Activated T-helper 2 cell treated with anti-CD3 and anti-CD28 coated beads, Interferon-gamma antibody, Interleukin-2, Interleukin-4, amounts not matched to agents 10 μg/mL and 5 μg/mL and 100 μg/mL, durations not matched to agents 14 hours and 24 hours and 36 hours (primary cell): ENCODE measurements at regions of chr1 and their contacts with region 1.

Region 1: DNA sequence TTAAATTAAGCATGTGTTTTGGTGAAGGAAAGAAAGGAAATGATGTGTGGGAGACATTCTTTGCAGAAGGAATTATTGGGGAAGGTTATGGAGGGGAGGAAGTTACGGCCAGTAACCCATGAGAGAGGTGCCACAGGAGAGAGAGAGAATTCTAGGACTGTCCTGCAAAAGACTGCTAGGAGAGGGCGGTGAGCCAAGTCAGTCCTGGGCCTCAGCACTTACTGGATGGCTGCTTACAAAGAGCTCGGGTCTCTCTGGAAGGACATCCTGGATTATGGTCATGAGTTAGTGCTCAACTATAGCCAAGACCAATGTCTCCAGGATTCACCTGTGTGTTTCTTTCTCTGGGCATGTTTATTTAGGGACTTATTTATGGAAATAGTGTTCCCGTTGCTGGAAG is 74.4 kb upstream of the HSD17B7 start:
- DNase-seq: no peak
- H3K4me3 Mint-ChIP-seq: no peak overlapping the region
- H3K27ac Mint-ChIP-seq: no peak overlapping the region
- H3K4me1 Mint-ChIP-seq: peaks cover 11% of the 10 kb centered on the region
- H3K27me3 Mint-ChIP-seq: peaks cover 20% of the 10 kb centered on the region

Region 2: DNA sequence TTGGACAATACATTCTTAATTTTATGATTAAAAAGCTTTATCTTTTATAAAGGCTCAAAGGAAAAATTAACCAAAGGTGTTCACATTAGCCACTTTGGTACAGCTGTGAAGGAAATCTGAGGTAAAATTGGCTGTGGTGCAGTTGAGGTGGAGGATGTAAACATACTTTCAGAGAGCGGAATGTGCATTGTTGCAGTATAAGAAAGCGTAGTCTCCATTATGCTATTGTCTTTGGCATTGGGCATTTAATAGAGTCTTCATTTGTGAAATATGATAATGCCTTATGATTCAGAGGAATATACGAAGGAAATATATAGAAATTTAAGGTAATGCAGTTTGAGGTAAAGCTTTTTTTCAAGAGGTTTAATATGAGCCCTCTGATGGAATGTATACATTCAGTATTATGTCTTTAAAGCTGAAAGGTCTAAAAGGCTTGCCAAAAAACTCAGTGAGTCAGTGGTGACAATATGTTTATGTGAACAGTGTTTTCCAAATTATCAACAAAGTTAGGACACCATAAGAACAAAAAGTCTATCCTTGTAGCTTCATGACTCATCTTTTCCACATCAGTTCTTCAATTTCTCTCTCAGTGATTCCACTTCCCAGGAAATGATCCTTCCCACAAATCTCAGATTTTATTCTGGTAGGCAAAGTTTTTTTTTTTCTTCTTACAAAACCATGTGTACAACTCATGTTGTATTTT is 110.7 kb before region 1 on chr1:
- intact Hi-C with region 1: no loop called
- DNase-seq: no peak
- H3K4me3 Mint-ChIP-seq: no peak overlapping the region
- H3K27ac Mint-ChIP-seq: no peak overlapping the region
- H3K4me1 Mint-ChIP-seq: no peaks in the 10 kb centered on the region
- H3K27me3 Mint-ChIP-seq: no peaks in the 10 kb centered on the region

Region 3: DNA sequence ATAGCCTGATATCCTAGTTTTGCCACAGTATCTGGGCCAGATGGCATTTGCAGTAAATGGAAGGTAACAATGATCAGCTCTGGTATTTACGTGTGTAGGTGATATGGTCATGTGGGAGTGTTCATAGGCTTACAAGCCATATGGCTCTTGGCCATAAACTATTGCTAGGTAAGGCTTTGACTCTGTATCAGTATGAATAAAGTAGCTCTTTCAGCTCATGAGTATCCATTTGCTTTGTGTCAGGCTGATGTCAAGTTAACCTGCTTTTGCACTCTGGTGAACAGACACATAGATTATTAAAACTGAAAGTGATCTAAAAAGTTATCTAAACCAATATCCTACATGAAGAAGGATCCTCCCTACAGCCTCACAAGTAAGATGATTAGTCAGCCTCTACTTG is 14.8 kb before region 1 on chr1:
- intact Hi-C with region 1: loop called (anchors 2 kb)
- DNase-seq: no peak
- H3K4me3 Mint-ChIP-seq: no peak overlapping the region
- H3K27ac Mint-ChIP-seq: no peak overlapping the region
- H3K4me1 Mint-ChIP-seq: no peaks in the 10 kb centered on the region
- H3K27me3 Mint-ChIP-seq: peaks cover 2% of the 10 kb centered on the region

Region 4: GRCh38 chr1:164210211-164210739 is 1494.2 kb after region 1 on chr1:
- intact Hi-C with region 1: no loop called
- DNase-seq: no peak
- H3K4me3 Mint-ChIP-seq: no peak overlapping the region
- H3K27ac Mint-ChIP-seq: no peak overlapping the region
- H3K4me1 Mint-ChIP-seq: no peaks in the 10 kb centered on the region
- H3K27me3 Mint-ChIP-seq: no peaks in the 10 kb centered on the region